GM12878 (cell line): ENCODE measurements at regions of chr9 and their contacts with region 1.

Region 1: DNA sequence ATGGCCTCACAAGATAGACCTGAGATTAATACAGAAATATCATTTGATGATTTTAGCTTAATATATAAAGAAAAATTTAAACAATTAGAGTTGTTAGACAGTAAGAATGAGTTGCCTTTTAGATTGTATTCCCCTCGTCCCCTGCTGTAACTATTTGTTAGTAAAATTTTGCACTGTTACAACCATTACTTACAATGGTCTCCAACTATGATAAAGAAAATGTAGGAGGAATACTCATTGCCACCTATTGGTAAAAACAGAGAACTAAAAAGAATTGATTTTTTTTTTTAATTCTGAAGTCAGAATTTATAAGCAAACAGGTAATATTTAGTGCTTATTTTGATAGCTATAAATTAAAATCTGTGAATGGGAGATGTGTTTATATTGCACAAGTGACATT is 937.6 kb downstream of the TLE4 start:
- DNase-seq: no peak
- ATAC-seq: no peak
- H3K4me3 ChIP-seq: no peak overlapping the region
- H3K27ac ChIP-seq: no peak overlapping the region
- H3K4me1 ChIP-seq: no peaks in the 10 kb centered on the region
- H3K27me3 ChIP-seq: no peaks in the 10 kb centered on the region
- CTCF ChIP-seq: no peak
- EP300 ChIP-seq: no peak
- POLR2A ChIP-seq: no peak
- RAD21 ChIP-seq: no peak

Region 2: DNA sequence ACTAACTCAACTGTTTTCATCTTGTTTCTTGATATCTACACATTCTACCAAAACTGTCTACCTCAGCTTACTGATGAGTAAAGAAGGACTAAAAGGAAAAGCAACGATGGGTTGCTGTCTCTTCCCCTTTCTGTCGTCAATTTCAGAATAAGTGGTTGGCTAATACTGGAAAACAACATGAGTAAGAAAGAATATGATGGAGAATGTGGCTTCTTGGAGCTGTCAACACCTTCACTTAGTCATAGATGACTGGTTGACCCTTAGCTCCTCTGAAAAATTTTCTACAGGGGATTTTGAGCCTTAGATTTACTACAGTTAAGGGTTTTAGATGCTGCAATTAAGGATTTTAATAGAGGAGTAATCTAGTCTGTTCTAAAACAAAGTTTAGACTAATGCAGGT is 139.7 kb before region 1 on chr9:
- CTCF ChIA-PET with region 1: no interaction called
- POLR2A ChIA-PET with region 1: no interaction called
- RAD21 ChIA-PET with region 1: no interaction called
- SMC1A ChIA-PET with region 1: no interaction called
- in situ Hi-C with region 1: no loop called
- intact Hi-C with region 1: no loop called
- DNase-seq: no peak
- ATAC-seq: no peak
- H3K4me3 ChIP-seq: no peak overlapping the region
- H3K27ac ChIP-seq: no peak overlapping the region
- H3K4me1 ChIP-seq: no peaks in the 10 kb centered on the region
- H3K27me3 ChIP-seq: no peaks in the 10 kb centered on the region
- CTCF ChIP-seq: no peak
- EP300 ChIP-seq: no peak
- POLR2A ChIP-seq: no peak
- RAD21 ChIP-seq: no peak

Region 3: DNA sequence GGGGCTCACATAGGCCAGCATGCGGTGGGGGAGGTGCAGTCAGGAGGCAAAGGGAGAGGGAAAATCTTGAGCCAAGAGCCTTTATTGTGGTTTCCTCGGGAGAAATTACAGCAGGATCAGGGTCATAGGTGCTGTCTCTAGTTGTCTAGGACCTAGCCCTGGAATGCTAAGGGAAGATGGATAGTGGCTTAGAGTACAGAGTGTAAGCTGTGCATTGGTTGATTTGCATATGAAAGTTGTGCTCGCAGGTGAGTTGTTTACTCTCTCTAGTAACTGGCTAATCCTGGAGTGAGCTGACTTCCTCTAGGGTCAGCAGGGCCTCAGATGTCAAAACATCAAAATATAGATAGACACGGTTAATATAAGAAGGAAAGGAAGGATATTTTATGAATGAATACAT is 59.8 kb before region 1 on chr9:
- CTCF ChIA-PET with region 1: no interaction called
- POLR2A ChIA-PET with region 1: no interaction called
- RAD21 ChIA-PET with region 1: no interaction called
- SMC1A ChIA-PET with region 1: no interaction called
- in situ Hi-C with region 1: no loop called
- intact Hi-C with region 1: no loop called
- DNase-seq: no peak
- ATAC-seq: no peak
- H3K4me3 ChIP-seq: no peak overlapping the region
- H3K27ac ChIP-seq: no peak overlapping the region
- H3K4me1 ChIP-seq: no peaks in the 10 kb centered on the region
- H3K27me3 ChIP-seq: no peaks in the 10 kb centered on the region
- CTCF ChIP-seq: no peak
- EP300 ChIP-seq: no peak
- POLR2A ChIP-seq: no peak
- RAD21 ChIP-seq: no peak

Region 4: GRCh38 chr9:80522465-80522864 is 13.1 kb after region 1 on chr9:
- CTCF ChIA-PET with region 1: no interaction called
- POLR2A ChIA-PET with region 1: no interaction called
- RAD21 ChIA-PET with region 1: no interaction called
- SMC1A ChIA-PET with region 1: no interaction called
- in situ Hi-C with region 1: no loop called
- intact Hi-C with region 1: loop called (anchors 2 kb)
- DNase-seq: no peak
- ATAC-seq: no peak
- H3K4me3 ChIP-seq: no peak overlapping the region
- H3K27ac ChIP-seq: no peak overlapping the region
- H3K4me1 ChIP-seq: no peaks in the 10 kb centered on the region
- H3K27me3 ChIP-seq: no peaks in the 10 kb centered on the region
- CTCF ChIP-seq: no peak
- EP300 ChIP-seq: no peak
- POLR2A ChIP-seq: no peak
- RAD21 ChIP-seq: no peak

Region 5: DNA sequence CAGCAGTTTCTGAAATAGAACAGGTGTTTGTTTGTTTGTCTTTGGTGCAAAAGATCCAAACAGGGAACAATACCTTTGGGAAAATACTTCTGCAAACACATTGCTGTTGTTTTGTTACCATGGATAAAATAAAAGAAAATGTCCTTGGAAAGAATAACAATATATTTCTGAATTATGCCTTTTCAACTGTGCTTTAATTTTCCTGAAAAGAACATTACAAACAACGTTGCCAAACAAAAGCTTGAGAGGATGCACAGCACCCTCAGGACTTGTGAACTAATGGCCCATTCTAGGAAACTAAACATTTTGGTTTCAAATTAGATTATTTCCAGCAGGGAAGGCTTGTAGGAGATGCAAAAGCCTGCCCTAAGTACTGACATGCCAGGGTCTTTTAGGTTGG is 29.6 kb after region 1 on chr9:
- CTCF ChIA-PET with region 1: no interaction called
- POLR2A ChIA-PET with region 1: no interaction called
- RAD21 ChIA-PET with region 1: no interaction called
- SMC1A ChIA-PET with region 1: no interaction called
- in situ Hi-C with region 1: no loop called
- intact Hi-C with region 1: no loop called
- DNase-seq: no peak
- ATAC-seq: no peak
- H3K4me3 ChIP-seq: no peak overlapping the region
- H3K27ac ChIP-seq: no peak overlapping the region
- H3K4me1 ChIP-seq: no peaks in the 10 kb centered on the region
- H3K27me3 ChIP-seq: no peaks in the 10 kb centered on the region
- CTCF ChIP-seq: no peak
- EP300 ChIP-seq: no peak
- POLR2A ChIP-seq: no peak
- RAD21 ChIP-seq: no peak